T-cell (primary cell): ENCODE measurements at regions of chr5 and their contacts with region 1.

Region 1: DNA sequence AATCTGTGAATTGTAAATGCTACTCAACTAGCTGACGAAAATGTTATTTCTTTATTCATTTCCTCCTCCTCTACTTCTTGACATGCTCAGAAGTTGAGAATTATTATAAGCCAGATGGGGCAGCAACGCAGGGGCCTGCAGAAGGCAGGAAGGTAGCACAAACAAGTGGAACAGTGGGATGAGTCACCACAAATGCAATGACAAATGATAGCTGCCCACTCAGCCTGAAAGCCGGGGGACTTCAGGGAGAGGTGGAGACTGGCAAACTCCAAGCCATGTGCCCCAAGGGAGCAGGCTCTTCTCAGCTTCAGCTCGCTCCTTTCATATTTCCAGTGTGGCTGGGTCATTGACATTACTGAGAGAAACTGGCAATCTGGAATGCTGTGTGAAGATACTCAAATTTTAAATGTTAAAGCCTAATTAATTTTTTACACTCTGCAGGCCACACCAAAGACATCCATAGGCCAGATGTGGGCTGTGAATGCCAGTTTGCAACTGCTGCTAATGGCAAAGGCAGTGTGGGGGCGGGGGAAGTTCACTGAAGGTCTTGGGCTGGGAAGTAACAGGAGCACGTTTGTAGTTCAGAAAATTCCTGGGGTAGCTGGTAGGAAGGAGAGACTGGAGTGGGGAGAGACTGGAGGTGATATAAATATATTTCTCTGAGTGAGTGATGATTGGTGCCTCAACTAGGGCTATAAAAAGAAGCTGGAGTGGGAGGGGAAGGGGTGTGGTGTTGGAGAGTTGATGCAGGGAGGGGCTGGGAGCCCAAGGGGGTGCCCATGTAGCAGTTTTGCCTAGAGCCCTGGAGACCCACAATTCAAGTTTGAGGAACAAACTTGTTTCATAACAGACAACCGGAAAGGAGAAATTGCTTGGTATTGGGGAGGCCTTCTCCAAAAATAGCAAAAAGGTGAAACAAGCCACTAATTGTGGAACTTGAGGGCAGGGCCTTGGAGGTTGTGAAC is 20.8 kb upstream of the ADRB2 start:
- DNase-seq: no peak
- ATAC-seq: no peak
- H3K4me3 ChIP-seq: no peak overlapping the region
- H3K4me3 Mint-ChIP-seq: no peak overlapping the region
- H3K27ac ChIP-seq: no peak overlapping the region
- H3K27ac Mint-ChIP-seq: no peak overlapping the region
- H3K4me1 ChIP-seq: peaks cover 13 to 14% of the 10 kb centered on the region in 2 experiments
- H3K4me1 Mint-ChIP-seq: peaks cover 26 to 38% (median 29%) of the 10 kb centered on the region in 3 donors
- H3K27me3 ChIP-seq: no peaks in the 10 kb centered on the region
- H3K27me3 Mint-ChIP-seq: peaks cover 0 to 7% of the 10 kb centered on the region in 2 donors

Region 2: GRCh38 chr5:147699496-147700088 is 1106.0 kb before region 1 on chr5:
- CTCF ChIA-PET with region 1: no interaction called
- POLR2A ChIA-PET with region 1: no interaction called
- DNase-seq: no peak
- ATAC-seq: no peak
- H3K4me3 ChIP-seq: no peak overlapping the region
- H3K4me3 Mint-ChIP-seq: no peak overlapping the region
- H3K27ac ChIP-seq: no peak overlapping the region
- H3K27ac Mint-ChIP-seq: no peak overlapping the region
- H3K4me1 ChIP-seq: no peaks in the 10 kb centered on the region
- H3K4me1 Mint-ChIP-seq: no peaks in the 10 kb centered on the region
- H3K27me3 ChIP-seq: no peaks in the 10 kb centered on the region
- H3K27me3 Mint-ChIP-seq: peaks cover 0 to 3% of the 10 kb centered on the region in 2 donors

Region 3: DNA sequence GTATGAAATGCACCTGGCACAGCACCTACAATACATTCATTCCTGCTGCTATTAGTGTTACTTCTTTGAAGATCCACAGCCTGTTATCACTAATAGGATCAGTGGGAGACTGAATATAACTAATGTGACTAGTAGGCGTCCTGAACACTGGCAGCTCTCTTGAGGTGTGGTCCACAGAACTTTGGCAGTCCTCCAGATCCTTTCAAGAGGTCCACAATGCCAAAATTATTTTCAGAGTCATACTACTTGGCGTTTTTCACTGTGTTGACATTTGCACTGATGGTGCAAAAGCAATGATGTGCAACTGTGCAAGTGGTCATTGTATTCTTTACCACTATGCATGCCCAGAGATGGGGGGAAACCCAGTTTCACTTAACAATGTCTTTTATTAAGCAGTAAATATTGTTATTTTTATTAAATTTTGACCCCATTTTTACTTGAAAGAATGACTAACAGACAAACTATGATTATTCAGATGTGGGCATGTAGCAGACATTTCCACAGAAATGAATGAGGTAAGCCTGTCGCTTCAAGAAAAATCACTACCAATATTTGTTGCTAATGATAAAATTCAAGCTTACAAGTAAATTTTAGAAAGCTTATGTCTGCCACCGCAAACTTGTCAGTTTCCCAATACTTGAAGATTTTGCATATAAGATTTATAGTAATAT is 69.7 kb after region 1 on chr5:
- CTCF ChIA-PET with region 1: no interaction called
- POLR2A ChIA-PET with region 1: interaction called in 1 of 2 experiments, 10 read pairs
- DNase-seq: no peak
- ATAC-seq: no peak
- H3K4me3 ChIP-seq: no peak overlapping the region
- H3K4me3 Mint-ChIP-seq: no peak overlapping the region
- H3K27ac ChIP-seq: no peak overlapping the region
- H3K27ac Mint-ChIP-seq: no peak overlapping the region
- H3K4me1 ChIP-seq: peaks cover 0 to under 1% of the 10 kb centered on the region in 2 experiments
- H3K4me1 Mint-ChIP-seq: peaks cover 0 to under 1% (median 0%) of the 10 kb centered on the region in 3 donors
- H3K27me3 ChIP-seq: peaks cover 0 to 2% of the 10 kb centered on the region in 2 experiments
- H3K27me3 Mint-ChIP-seq: peaks cover 4 to 5% of the 10 kb centered on the region in 2 donors